ENCODE measurements at regions of chr11 and their contacts with region 1.

Region 1: DNA sequence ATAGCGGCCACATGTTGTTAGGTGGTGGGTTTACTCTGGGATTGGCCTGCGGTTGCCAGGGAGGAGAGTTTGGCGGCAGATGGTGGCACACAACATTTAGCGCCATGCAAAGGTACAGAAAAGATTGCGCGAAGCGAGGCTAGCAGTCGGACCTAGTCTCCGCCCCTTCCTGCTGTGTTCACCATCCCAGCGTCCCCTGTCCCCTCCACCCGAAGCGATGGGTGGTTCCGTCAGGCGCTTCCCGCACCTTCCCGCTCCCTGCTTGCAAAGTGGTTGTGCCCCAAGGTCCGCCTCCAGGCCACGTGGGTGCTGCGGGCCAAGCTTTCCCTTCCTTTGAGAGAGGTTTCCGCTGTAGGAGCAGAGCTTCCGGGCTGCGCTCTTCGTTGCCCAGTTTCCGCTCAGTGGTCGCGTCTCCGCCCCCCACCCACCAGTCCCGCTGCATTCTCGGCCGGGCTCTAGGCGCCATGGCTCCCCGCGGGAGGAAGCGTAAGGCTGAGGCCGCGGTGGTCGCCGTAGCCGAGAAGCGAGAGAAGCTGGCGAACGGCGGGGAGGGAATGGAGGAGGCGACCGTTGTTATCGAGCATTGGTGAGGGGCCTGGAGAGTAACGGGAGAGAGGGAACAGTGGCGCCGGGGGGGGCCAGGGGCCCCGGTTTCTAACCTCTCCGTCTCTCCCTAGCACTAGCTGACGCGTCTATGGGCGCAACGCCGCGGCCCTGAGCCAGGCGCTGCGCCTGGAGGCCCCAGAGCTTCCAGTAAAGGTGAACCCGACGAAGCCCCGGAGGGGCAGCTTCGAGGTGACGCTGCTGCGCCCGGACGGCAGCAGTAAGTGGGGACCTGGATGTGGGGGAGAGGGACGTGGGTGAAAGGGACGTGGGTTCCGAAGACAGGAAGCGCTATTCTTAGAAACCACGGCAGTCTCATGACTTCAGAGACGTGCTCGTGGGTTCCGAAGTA is at the start of gene SELENOH:
- DNase-seq: peak; percentile 98
- H3K4me3 ChIP-seq: peak within 1 kb of the TSS; percentile 55 to 94 (median 75)
- H3K27ac ChIP-seq: peak within 1 kb of the TSS; percentile 71
- H3K4me1 ChIP-seq: peaks cover 11% of the 10 kb centered on the region
- H3K27me3 ChIP-seq: no peaks in the 10 kb centered on the region
- CTCF ChIP-seq: no peak
- POLR2A ChIP-seq: peak; percentile 95
- total RNA-seq, gene SELENOH: 161 and 167 TPM in 2 replicates

Region 2: GRCh38 chr11:57493507-57494503 is 247.6 kb before region 1 on chr11:
- CTCF ChIA-PET with region 1: no interaction called
- POLR2A ChIA-PET with region 1: no interaction called
- dilution Hi-C with region 1: no loop called
- intact Hi-C with region 1: no loop called
- DNase-seq: peak; percentile 42
- H3K4me3 ChIP-seq: no peak overlapping the region
- H3K27ac ChIP-seq: no peak overlapping the region
- H3K4me1 ChIP-seq: no peaks in the 10 kb centered on the region
- H3K27me3 ChIP-seq: no peaks in the 10 kb centered on the region
- CTCF ChIP-seq: peak; percentile 85 to 91
- POLR2A ChIP-seq: no peak

Region 3: DNA sequence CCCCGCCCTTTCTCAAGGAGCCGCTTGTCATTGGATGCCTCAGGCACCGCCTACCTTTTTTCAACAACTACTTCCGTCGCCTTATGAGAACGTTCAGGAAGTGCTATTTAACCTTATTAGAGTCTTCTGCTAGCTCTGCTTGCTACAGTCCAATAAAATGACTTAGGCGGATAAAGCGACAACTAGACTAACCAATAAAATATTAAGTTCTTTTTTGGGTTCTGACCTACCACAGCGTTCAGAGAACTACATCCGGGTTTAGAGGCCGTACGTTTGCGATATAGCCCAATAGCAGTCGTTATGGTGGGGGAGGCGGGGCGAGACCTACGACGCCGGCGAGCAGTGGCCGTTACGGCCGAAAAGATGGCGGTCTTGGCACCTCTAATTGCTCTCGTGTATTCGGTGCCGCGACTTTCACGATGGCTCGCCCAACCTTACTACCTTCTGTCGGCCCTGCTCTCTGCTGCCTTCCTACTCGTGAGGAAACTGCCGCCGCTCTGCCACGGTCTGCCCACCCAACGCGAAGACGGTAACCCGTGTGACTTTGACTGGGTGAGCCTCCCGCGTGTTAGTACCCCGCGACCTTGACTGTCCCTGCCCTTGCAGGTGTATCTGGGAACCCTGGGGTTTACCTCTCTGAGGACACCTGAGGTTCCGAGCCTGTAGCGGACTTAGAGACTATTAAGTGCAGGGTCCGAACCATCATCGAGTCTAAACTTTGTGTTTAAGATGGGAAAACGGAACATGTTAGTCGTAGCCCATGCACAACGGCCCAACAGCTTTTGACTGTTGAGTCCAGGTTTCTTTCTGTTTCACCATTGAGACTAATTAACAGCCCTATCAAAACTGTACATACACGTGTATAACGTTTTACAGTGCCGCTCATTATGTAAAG is 28.9 kb before region 1 on chr11 and contains the start of gene TMX2:
- CTCF ChIA-PET with region 1: interaction called, 5 read pairs
- POLR2A ChIA-PET with region 1: interaction called, 4 read pairs
- dilution Hi-C with region 1: no loop called
- intact Hi-C with region 1: loop called (anchors 1 kb)
- DNase-seq: peak; percentile 99
- H3K4me3 ChIP-seq: peak within 1 kb of the TSS; percentile 64 to 100 (median 78)
- H3K27ac ChIP-seq: peak within 1 kb of the TSS; percentile 67
- H3K4me1 ChIP-seq: peaks cover 18% of the 10 kb centered on the region
- H3K27me3 ChIP-seq: no peaks in the 10 kb centered on the region
- CTCF ChIP-seq: no peak
- POLR2A ChIP-seq: no peak
- total RNA-seq, gene TMX2: 66.3 and 67.7 TPM in 2 replicates

Region 4: GRCh38 chr11:57751676-57752253 is 10.4 kb after region 1 on chr11 and contains the start of gene BTBD18:
- CTCF ChIA-PET with region 1: interaction called, 26 read pairs
- POLR2A ChIA-PET with region 1: interaction called, 5 read pairs
- dilution Hi-C with region 1: no loop called
- intact Hi-C with region 1: no loop called
- DNase-seq: peak; percentile 60
- H3K4me3 ChIP-seq: no peak within 1 kb of the TSS
- H3K27ac ChIP-seq: no peak within 1 kb of the TSS
- H3K4me1 ChIP-seq: no peaks in the 10 kb centered on the region
- H3K27me3 ChIP-seq: no peaks in the 10 kb centered on the region
- CTCF ChIP-seq: peak; percentile 46 to 49
- POLR2A ChIP-seq: no peak
- total RNA-seq, gene BTBD18: not detected in 2 replicates

Region 5: GRCh38 chr11:57761301-57762234 is 20.2 kb after region 1 on chr11 and contains the start of gene CTNND1:
- CTCF ChIA-PET with region 1: interaction called, 3 read pairs
- POLR2A ChIA-PET with region 1: interaction called, 3 read pairs
- dilution Hi-C with region 1: no loop called
- intact Hi-C with region 1: loop called (anchors 2 kb)
- DNase-seq: peak; percentile 97
- H3K4me3 ChIP-seq: peak within 1 kb of the TSS; percentile 68 to 98 (median 83)
- H3K27ac ChIP-seq: peak within 1 kb of the TSS; percentile 89
- H3K4me1 ChIP-seq: peaks cover 26% of the 10 kb centered on the region
- H3K27me3 ChIP-seq: no peaks in the 10 kb centered on the region
- CTCF ChIP-seq: no peak
- POLR2A ChIP-seq: peak; percentile 80
- total RNA-seq, gene CTNND1: 268 and 285 TPM in 2 replicates

Region 6: DNA sequence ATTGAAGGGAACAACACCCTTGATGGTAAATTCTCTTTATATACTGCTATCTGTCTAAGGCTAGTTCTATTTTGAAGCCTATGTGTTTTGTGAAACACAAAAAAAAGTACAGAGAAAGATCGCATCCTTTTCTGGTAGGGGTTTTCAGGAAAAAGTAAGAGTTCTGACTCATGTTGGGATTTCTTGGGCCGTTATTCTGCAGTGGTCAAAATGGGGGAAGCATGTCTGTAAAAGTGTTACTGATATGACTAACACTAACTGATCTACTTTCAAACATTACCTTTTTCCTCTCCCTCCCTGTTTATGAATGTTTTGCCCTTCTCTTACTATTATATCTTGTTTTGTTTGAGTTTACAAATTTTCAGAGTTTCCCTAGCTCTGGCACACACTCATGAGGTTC is 74.1 kb after region 1 on chr11:
- CTCF ChIA-PET with region 1: no interaction called
- POLR2A ChIA-PET with region 1: no interaction called
- dilution Hi-C with region 1: no loop called
- intact Hi-C with region 1: no loop called
- DNase-seq: no peak
- H3K4me3 ChIP-seq: no peak overlapping the region
- H3K27ac ChIP-seq: no peak overlapping the region
- H3K4me1 ChIP-seq: no peaks in the 10 kb centered on the region
- H3K27me3 ChIP-seq: no peaks in the 10 kb centered on the region
- CTCF ChIP-seq: no peak
- POLR2A ChIP-seq: no peak

Region 7: GRCh38 chr11:57974848-57975601 is 233.6 kb after region 1 on chr11:
- CTCF ChIA-PET with region 1: no interaction called
- POLR2A ChIA-PET with region 1: no interaction called
- dilution Hi-C with region 1: no loop called
- intact Hi-C with region 1: no loop called
- DNase-seq: no peak
- H3K4me3 ChIP-seq: no peak overlapping the region
- H3K27ac ChIP-seq: no peak overlapping the region
- H3K4me1 ChIP-seq: no peaks in the 10 kb centered on the region
- H3K27me3 ChIP-seq: peaks cover 0 to 6% of the 10 kb centered on the region in 2 experiments
- CTCF ChIP-seq: no peak
- POLR2A ChIP-seq: no peak

Measured in endothelial cell of umbilical vein (primary cell).